Dendritic cell treated with granulocyte-macrophage colony-stimulating factor and Interleukin-4, amounts not matched to agents 40 ng/mL and 50 ng/mL, for 4 days (primary cell): ENCODE measurements at regions of chr12 and their contacts with region 1.

Region 1: DNA sequence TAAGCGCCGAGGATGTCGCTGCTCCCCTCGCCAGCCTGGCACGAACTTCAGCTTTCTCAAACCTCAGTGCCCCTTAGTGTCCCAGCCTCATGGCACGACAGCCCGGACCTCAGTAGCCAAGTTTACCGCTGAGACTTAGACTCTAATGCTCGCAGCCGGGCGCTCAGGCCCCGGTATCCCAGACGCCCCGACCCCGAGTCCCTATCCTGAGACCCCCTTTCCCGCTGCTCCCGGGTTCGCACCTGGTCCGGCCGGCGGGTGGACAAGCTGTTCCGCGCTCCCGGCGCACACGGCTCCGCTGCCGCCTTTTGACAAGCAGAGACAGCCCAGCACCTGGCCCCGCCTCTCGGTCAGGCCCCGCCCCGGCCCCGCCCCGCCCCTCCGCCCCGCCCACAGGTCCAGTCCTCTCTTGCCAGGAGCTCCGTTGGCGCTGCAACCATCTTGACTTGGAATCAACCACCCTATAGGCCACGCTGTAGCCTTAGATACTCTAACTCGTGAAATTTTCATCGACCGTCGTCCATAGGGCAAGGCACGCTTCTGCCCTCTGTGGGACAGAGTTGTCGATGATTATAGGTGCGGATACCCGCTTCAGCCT is at the start of gene VDR:
- H3K4me3 Mint-ChIP-seq: peak within 1 kb of the TSS; percentile 85
- H3K27ac Mint-ChIP-seq: peak within 1 kb of the TSS; percentile 83
- H3K4me1 Mint-ChIP-seq: peaks cover 46% of the 10 kb centered on the region
- H3K27me3 Mint-ChIP-seq: peaks cover 34% of the 10 kb centered on the region

Region 2: DNA sequence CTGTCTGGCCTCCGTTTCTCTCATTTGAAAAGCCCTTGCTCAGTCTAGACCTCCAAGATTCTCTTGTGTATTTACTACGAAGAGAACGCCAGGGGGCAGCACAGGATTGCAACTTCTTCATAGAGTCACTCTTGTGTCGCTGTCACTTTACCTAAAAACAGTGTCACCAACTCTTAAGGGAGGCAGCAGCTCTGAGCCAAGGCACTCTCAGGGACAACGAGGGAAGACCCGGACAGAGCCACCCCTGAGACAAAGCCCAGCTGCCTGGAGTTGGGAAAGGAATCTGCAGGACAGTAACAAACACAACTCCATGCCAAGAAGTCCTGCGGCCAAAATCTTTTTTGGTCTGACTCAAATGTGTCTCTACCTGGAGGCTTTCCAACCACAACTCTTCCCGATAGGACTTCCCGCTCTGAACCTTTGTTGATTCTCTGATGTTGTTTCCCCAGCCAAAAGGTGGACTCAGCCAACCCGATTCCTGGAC is 189.4 kb before region 1 on chr12:
- intact Hi-C with region 1: loop called (anchors 5 kb)
- H3K4me3 Mint-ChIP-seq: peak overlapping the region; percentile 26
- H3K27ac Mint-ChIP-seq: peak overlapping the region; percentile 68
- H3K4me1 Mint-ChIP-seq: peaks cover 76% of the 10 kb centered on the region
- H3K27me3 Mint-ChIP-seq: peaks cover 4% of the 10 kb centered on the region

Region 3: DNA sequence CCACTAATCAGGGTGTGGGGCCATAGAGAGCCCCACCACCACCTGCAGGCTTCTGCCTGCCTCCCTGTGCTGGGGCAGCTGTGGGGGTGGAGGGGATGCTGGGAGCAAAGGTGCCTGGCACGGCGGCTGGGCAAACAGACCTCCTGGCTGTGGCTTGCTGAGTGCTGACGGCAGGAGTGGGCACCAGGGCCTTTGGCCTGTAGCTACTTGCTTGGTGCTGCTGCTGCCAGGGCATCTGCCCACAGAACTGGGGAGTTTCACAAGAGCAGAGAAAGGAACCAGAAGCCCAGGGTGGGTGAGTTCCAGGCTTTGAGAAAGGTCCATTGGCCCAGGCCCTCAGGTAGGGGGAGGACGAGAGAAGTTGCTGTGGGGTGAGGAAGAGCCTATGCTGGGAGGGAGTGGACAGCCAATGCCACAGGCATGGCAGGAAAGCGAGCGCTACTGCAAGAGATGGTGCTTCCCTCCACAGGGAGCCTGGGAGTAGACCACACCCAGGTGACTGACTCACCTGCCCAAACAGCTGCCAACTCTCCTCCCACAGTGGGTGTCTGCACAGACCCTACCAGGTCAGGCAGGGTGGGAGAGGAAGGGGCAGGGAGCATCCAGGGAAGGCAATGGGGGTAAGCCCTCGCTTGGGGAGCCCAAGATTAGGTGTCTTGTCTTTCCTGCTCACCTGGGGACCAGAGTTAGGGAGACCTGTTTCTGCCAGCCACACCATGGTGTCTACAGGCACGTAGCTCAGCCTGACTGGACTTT is 46.1 kb before region 1 on chr12:
- intact Hi-C with region 1: loop called (anchors 10 kb)
- H3K4me3 Mint-ChIP-seq: no peak overlapping the region
- H3K27ac Mint-ChIP-seq: peak overlapping the region; percentile 72
- H3K4me1 Mint-ChIP-seq: peaks cover 32% of the 10 kb centered on the region
- H3K27me3 Mint-ChIP-seq: no peaks in the 10 kb centered on the region

Region 4: GRCh38 chr12:47870175-47870781 is 34.5 kb before region 1 on chr12:
- intact Hi-C with region 1: loop called (anchors 1 kb)
- H3K4me3 Mint-ChIP-seq: no peak overlapping the region
- H3K27ac Mint-ChIP-seq: peak overlapping the region; percentile 97
- H3K4me1 Mint-ChIP-seq: peaks cover 97% of the 10 kb centered on the region
- H3K27me3 Mint-ChIP-seq: no peaks in the 10 kb centered on the region

Region 5: GRCh38 chr12:47882781-47883546 is 21.8 kb before region 1 on chr12:
- intact Hi-C with region 1: loop called (anchors 2 kb)
- H3K4me3 Mint-ChIP-seq: peak overlapping the region; percentile 60
- H3K27ac Mint-ChIP-seq: peak overlapping the region; percentile 84
- H3K4me1 Mint-ChIP-seq: peaks cover 85% of the 10 kb centered on the region
- H3K27me3 Mint-ChIP-seq: no peaks in the 10 kb centered on the region

Region 6: GRCh38 chr12:47889040-47889439 is 15.8 kb before region 1 on chr12:
- intact Hi-C with region 1: loop called (anchors 1 kb)
- H3K4me3 Mint-ChIP-seq: peak overlapping the region; percentile 30
- H3K27ac Mint-ChIP-seq: peak overlapping the region; percentile 95
- H3K4me1 Mint-ChIP-seq: peaks cover 94% of the 10 kb centered on the region
- H3K27me3 Mint-ChIP-seq: no peaks in the 10 kb centered on the region

Region 7: DNA sequence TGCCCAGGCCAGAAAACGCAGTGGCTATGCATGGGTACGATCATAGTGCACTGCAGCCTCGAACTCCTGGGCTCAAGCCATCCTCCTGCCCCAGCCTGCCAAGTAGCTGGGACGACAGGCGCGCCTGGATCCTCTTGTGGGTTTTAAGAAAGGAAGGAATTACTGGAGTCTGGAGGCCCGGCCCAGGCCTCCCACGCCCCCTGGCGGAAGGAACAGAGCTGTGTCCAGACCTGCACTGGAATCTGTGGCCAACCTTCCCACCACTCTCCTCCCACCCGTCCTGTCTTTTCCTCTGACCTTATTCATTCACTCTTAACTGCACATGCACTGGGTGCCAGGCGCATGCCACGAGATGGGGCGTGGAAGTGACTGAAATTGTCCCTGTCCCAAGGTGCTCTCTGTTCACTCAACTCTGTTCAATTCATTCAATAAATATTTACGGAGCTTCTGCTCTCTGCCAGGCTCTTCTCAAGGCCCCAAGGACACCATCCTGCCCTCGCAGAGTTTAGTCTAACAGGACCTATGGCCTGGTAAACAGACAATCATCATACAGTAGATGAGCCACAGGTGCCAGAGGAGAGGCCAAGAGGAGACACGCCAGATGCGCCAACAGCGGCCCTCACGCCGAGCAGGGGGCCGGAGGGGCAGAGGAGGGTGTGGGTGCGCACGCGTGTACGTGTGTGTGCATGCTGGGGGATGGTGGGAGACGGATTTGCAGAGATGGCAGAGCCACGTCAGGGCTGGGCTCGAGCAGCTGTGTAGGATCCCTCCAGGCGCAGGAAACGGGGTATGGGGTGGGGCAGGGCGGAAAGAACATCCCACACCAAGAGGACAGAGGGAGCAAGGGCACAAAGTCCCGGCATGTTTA is 44.9 kb after region 1 on chr12:
- intact Hi-C with region 1: loop called (anchors 5 kb)
- H3K4me3 Mint-ChIP-seq: no peak overlapping the region
- H3K27ac Mint-ChIP-seq: peak overlapping the region; percentile 49
- H3K4me1 Mint-ChIP-seq: peaks cover 27% of the 10 kb centered on the region
- H3K27me3 Mint-ChIP-seq: peaks cover 12% of the 10 kb centered on the region

Region 8: GRCh38 chr12:48157018-48157888 is 252.4 kb after region 1 on chr12 and contains the start of gene ASB8:
- intact Hi-C with region 1: no loop called
- H3K4me3 Mint-ChIP-seq: peak within 1 kb of the TSS; percentile 88
- H3K27ac Mint-ChIP-seq: peak within 1 kb of the TSS; percentile 91
- H3K4me1 Mint-ChIP-seq: peaks cover 6% of the 10 kb centered on the region
- H3K27me3 Mint-ChIP-seq: no peaks in the 10 kb centered on the region